ENCODE measurements at regions of chr11 and their contacts with region 1.

Region 1: DNA sequence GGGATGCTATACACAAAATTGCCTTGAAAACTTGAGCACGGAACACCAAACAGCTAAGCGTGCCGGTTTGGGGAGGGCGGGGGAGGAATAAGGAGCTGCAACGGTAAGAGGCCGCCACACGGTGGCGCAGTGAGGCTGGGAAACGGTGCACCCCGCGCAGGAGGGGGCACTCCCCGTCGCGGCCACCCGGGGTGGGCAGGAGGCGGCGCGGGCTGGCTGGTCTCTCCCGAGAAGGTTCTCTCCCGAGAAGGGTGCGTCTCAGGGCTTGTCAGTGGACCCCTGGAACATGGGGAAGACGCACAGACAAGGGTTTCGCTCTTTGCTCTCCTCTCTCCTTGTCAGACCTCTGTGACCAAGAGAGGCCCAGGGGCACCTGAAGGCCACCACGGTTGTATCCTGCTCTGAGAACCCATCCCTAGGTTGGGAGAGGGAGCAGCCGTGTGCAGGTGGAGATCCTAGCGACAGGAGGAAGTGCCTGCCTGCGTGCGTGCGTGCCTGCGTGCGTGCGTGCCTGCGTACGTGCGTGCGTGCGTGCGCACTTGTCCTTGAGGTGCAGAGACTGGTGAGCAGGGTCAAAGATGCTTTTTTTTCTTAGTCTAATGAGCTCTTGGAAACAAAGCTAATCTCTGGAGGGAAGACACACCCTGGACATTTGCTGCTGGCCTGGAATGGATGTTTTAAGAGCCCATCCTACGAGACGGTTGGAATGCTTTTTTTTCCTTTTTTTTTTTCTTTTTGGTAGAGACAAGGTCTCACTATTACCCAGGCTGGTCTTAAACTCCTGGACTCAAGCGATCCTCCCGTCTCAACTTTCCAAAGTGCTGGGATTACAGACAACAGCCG is 18.1 kb upstream of the JAM3 start:
- DNase-seq: peak in 1 of 2 donors; percentile 85
- H3K4me3 ChIP-seq: peak overlapping the region; percentile 40 to 41
- H3K27ac ChIP-seq: no peak overlapping the region
- H3K4me1 ChIP-seq: peaks cover 4 to 17% of the 10 kb centered on the region in 2 donors
- H3K27me3 ChIP-seq: no peaks in the 10 kb centered on the region
- CTCF ChIP-seq: peak; percentile 93 to 97 (median 95)

Region 2: GRCh38 chr11:133927690-133928627 is 122.8 kb before region 1 on chr11:
- intact Hi-C with region 1: loop called (anchors 1 kb)
- DNase-seq: peak in 1 of 2 donors; percentile 72
- H3K4me3 ChIP-seq: no peak overlapping the region
- H3K27ac ChIP-seq: no peak overlapping the region
- H3K4me1 ChIP-seq: no peaks in the 10 kb centered on the region
- H3K27me3 ChIP-seq: no peaks in the 10 kb centered on the region
- CTCF ChIP-seq: peak; percentile 60 to 92 (median 86)

Region 3: DNA sequence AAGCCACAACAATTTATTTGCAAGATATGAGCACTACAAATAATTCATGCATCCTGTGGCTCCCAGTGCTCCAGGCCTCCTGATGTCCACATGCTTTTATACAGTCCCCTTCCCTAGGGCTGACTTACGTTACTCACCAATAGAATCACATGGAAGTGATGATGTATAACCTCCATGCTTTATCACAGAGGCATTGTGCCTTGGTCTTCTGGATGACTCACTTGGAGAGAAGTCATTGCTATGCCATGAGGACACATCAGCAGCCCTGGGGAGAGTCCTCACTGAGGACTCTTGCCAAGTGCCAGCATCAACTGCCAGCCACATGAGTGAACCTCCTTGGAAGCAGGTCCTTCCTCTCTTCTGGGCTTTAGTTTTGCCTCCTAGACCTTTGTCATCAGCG is 72.0 kb before region 1 on chr11:
- intact Hi-C with region 1: no loop called
- DNase-seq: no peak
- H3K4me3 ChIP-seq: no peak overlapping the region
- H3K27ac ChIP-seq: no peak overlapping the region
- H3K4me1 ChIP-seq: no peaks in the 10 kb centered on the region
- H3K27me3 ChIP-seq: no peaks in the 10 kb centered on the region
- CTCF ChIP-seq: no peak

Region 4: GRCh38 chr11:134037046-134037908 is 13.5 kb before region 1 on chr11:
- intact Hi-C with region 1: loop called (anchors 1 kb)
- DNase-seq: peak in 1 of 2 donors; percentile 86
- H3K4me3 ChIP-seq: peak overlapping the region; percentile 58 to 70
- H3K27ac ChIP-seq: peak overlapping the region; percentile 87 to 89
- H3K4me1 ChIP-seq: peaks cover 23 to 36% of the 10 kb centered on the region in 2 donors
- H3K27me3 ChIP-seq: no peaks in the 10 kb centered on the region
- CTCF ChIP-seq: no peak

Region 5: GRCh38 chr11:134124660-134125451 is 74.1 kb after region 1 on chr11:
- intact Hi-C with region 1: loop called (anchors 1 kb)
- DNase-seq: no peak
- H3K4me3 ChIP-seq: peak overlapping the region; percentile 56 to 70
- H3K27ac ChIP-seq: peak overlapping the region; percentile 61 to 90
- H3K4me1 ChIP-seq: peaks cover 19 to 41% of the 10 kb centered on the region in 2 donors
- H3K27me3 ChIP-seq: no peaks in the 10 kb centered on the region
- CTCF ChIP-seq: peak in 1 of 3 experiments; percentile 17

Region 6: GRCh38 chr11:134331354-134332188 is 280.8 kb after region 1 on chr11 and contains the start of gene GLB1L2:
- intact Hi-C with region 1: loop called (anchors 5 kb)
- DNase-seq: peak in 1 of 2 donors; percentile 80
- H3K4me3 ChIP-seq: peak within 1 kb of the TSS; percentile 58 to 61
- H3K27ac ChIP-seq: no peak within 1 kb of the TSS
- H3K4me1 ChIP-seq: peaks cover 0 to 8% of the 10 kb centered on the region in 2 donors
- H3K27me3 ChIP-seq: no peaks in the 10 kb centered on the region
- CTCF ChIP-seq: no peak
- total RNA-seq, gene GLB1L2: 1.7 TPM